ENCODE measurements at regions of chr1 and their contacts with region 1.

Region 1: GRCh38 chr1:18681423-18681835 is 50.8 kb downstream of the PAX7 start:
- DNase-seq: peak in 4 of 14 experiments; percentile 23 to 53 (median 39)
- ATAC-seq: no peak
- H3K4me3 ChIP-seq: no peak overlapping the region
- H3K4me3 Mint-ChIP-seq: no peak overlapping the region
- H3K27ac ChIP-seq: no peak overlapping the region
- H3K27ac Mint-ChIP-seq: no peak overlapping the region
- H3K4me1 ChIP-seq: no peaks in the 10 kb centered on the region
- H3K4me1 Mint-ChIP-seq: no peaks in the 10 kb centered on the region
- H3K27me3 ChIP-seq: peaks cover 4 to 7% of the 10 kb centered on the region in 2 experiments
- H3K27me3 Mint-ChIP-seq: peaks cover 38% of the 10 kb centered on the region
- CTCF ChIP-seq: peak; percentile 67

Region 2: GRCh38 chr1:18365099-18365705 is 316.2 kb before region 1 on chr1:
- CTCF ChIA-PET with region 1: no interaction called
- POLR2A ChIA-PET with region 1: no interaction called
- intact Hi-C with region 1: no loop called
- DNase-seq: no peak
- ATAC-seq: no peak
- H3K4me3 ChIP-seq: no peak overlapping the region
- H3K4me3 Mint-ChIP-seq: no peak overlapping the region
- H3K27ac ChIP-seq: no peak overlapping the region
- H3K27ac Mint-ChIP-seq: no peak overlapping the region
- H3K4me1 ChIP-seq: no peaks in the 10 kb centered on the region
- H3K4me1 Mint-ChIP-seq: no peaks in the 10 kb centered on the region
- H3K27me3 ChIP-seq: peaks cover 11 to 14% of the 10 kb centered on the region in 2 experiments
- H3K27me3 Mint-ChIP-seq: peaks cover 57% of the 10 kb centered on the region
- CTCF ChIP-seq: no peak

Region 3: DNA sequence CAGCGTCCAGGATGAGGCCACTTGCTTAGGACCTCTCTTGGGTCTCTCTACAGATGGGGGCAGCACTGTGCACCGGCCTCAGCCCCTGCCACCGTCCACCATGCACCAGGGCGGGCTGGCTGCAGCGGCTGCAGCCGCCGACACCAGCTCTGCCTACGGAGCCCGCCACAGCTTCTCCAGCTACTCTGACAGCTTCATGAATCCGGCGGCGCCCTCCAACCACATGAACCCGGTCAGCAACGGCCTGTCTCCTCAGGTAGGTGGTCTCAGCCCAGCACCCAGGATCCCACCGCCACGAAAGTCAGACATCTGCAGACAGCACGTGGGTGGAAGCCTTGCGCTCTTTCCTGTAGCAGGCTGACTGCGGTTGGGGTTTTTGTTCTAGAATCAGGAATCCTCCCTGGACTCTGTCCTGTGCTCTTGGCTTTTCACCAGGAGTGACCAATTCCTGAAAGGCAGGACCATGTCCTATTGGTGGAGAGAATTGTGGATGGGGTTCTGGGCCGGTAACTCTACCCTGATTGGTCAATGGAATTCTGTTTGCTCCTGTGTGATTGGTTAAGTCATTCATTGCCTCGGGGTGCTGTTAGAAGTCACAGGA is 21.7 kb after region 1 on chr1:
- CTCF ChIA-PET with region 1: no interaction called
- POLR2A ChIA-PET with region 1: no interaction called
- intact Hi-C with region 1: no loop called
- DNase-seq: no peak
- ATAC-seq: no peak
- H3K4me3 ChIP-seq: no peak overlapping the region
- H3K4me3 Mint-ChIP-seq: no peak overlapping the region
- H3K27ac ChIP-seq: no peak overlapping the region
- H3K27ac Mint-ChIP-seq: no peak overlapping the region
- H3K4me1 ChIP-seq: no peaks in the 10 kb centered on the region
- H3K4me1 Mint-ChIP-seq: no peaks in the 10 kb centered on the region
- H3K27me3 ChIP-seq: peaks cover 8 to 28% of the 10 kb centered on the region in 2 experiments
- H3K27me3 Mint-ChIP-seq: peaks cover 64% of the 10 kb centered on the region
- CTCF ChIP-seq: no peak

Region 4: DNA sequence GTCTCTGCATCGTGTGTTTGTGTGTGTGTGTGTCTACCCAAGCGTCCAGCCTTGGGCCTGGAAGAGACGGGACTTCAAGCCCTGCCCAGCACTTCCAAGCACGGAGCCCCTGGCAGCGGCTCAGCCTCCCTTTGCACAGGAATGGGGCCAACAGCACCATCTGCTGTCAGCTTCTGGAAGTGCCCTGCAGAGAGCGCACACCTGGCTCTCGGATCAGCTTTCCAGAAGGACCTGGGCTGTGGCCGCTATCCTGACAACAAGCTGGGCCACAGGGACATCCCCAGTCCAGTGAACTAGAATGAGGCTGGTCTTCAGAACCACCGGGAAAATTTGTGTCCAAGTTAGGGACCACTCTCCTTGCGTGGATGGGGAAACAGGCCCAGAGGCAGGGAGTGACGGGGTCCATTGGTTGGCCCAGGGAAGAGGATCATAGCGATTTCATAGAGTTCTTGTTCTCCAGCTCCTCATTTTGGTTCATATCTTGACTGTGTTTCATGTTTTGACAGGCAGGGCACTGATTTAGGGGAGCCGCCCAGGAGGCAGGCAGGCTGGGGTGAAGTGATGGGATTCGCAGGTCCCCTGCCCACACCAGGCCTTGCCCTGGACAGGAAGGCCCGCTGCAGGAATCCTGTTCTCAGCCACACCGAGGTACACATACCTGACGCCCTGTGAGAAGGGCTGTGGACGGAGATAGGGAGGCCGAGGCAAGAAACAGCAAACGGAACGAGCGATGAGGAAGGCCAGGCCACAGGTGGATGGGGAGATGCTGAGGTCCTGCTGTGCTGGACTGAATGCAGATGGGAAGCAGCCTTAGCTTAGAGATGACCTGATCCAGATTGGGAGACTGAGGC is 139.6 kb after region 1 on chr1:
- CTCF ChIA-PET with region 1: no interaction called
- POLR2A ChIA-PET with region 1: no interaction called
- intact Hi-C with region 1: loop called in 1 of 2 experiments (anchors 5 kb)
- DNase-seq: peak; percentile 23 to 69 (median 50)
- ATAC-seq: peak; percentile 43
- H3K4me3 ChIP-seq: no peak overlapping the region
- H3K4me3 Mint-ChIP-seq: no peak overlapping the region
- H3K27ac ChIP-seq: no peak overlapping the region
- H3K27ac Mint-ChIP-seq: no peak overlapping the region
- H3K4me1 ChIP-seq: no peaks in the 10 kb centered on the region
- H3K4me1 Mint-ChIP-seq: no peaks in the 10 kb centered on the region
- H3K27me3 ChIP-seq: peaks cover 12 to 37% of the 10 kb centered on the region in 2 experiments
- H3K27me3 Mint-ChIP-seq: peaks cover 65% of the 10 kb centered on the region
- CTCF ChIP-seq: peak; percentile 66

Region 5: GRCh38 chr1:18831656-18832055 is 150.2 kb after region 1 on chr1:
- CTCF ChIA-PET with region 1: no interaction called
- POLR2A ChIA-PET with region 1: no interaction called
- intact Hi-C with region 1: no loop called
- DNase-seq: no peak
- ATAC-seq: no peak
- H3K4me3 ChIP-seq: no peak overlapping the region
- H3K4me3 Mint-ChIP-seq: no peak overlapping the region
- H3K27ac ChIP-seq: no peak overlapping the region
- H3K27ac Mint-ChIP-seq: no peak overlapping the region
- H3K4me1 ChIP-seq: no peaks in the 10 kb centered on the region
- H3K4me1 Mint-ChIP-seq: no peaks in the 10 kb centered on the region
- H3K27me3 ChIP-seq: peaks cover 6 to 7% of the 10 kb centered on the region in 2 experiments
- H3K27me3 Mint-ChIP-seq: peaks cover 21% of the 10 kb centered on the region
- CTCF ChIP-seq: no peak